ENCODE measurements at regions of chr1 and their contacts with region 1.

Region 1: GRCh38 chr1:154183045-154183915 is 8.6 kb downstream of the TPM3 start:
- DNase-seq: peak; percentile 89 to 92 (median 91)
- H3K4me3 ChIP-seq: peak overlapping the region; percentile 80 to 98 (median 80)
- H3K4me3 Mint-ChIP-seq: peak overlapping the region; percentile 100
- H3K27ac ChIP-seq: peak overlapping the region; percentile 74 to 94
- H3K27ac Mint-ChIP-seq: peak overlapping the region; percentile 99 to 100 (median 100)
- H3K4me1 ChIP-seq: peaks cover 39 to 46% of the 10 kb centered on the region in 2 donors
- H3K4me1 Mint-ChIP-seq: peaks cover 41% of the 10 kb centered on the region
- H3K27me3 ChIP-seq: no peaks in the 10 kb centered on the region
- H3K27me3 Mint-ChIP-seq: peaks cover 0 to 4% (median 0%) of the 10 kb centered on the region in 3 donors
- CTCF ChIP-seq: no peak

Region 2: GRCh38 chr1:153180556-153180955 is 1002.7 kb before region 1 on chr1:
- intact Hi-C with region 1: no loop called
- DNase-seq: no peak
- H3K4me3 ChIP-seq: no peak overlapping the region
- H3K4me3 Mint-ChIP-seq: no peak overlapping the region
- H3K27ac ChIP-seq: no peak overlapping the region
- H3K27ac Mint-ChIP-seq: no peak overlapping the region
- H3K4me1 ChIP-seq: no peaks in the 10 kb centered on the region
- H3K4me1 Mint-ChIP-seq: no peaks in the 10 kb centered on the region
- H3K27me3 ChIP-seq: peaks cover 2 to 4% of the 10 kb centered on the region in 2 donors
- H3K27me3 Mint-ChIP-seq: peaks cover 6 to 16% (median 7%) of the 10 kb centered on the region in 3 donors
- CTCF ChIP-seq: no peak

Region 3: GRCh38 chr1:154129391-154129970 is 53.8 kb before region 1 on chr1:
- intact Hi-C with region 1: loop called in 1 of 2 experiments (anchors 10 kb)
- DNase-seq: peak; percentile 37 to 66 (median 64)
- H3K4me3 ChIP-seq: peak overlapping the region in 2 of 3 experiments; percentile 12 to 66
- H3K4me3 Mint-ChIP-seq: peak overlapping the region in 1 of 2 donors; percentile 80
- H3K27ac ChIP-seq: peak overlapping the region; percentile 32 to 73
- H3K27ac Mint-ChIP-seq: peak overlapping the region; percentile 69 to 94 (median 87)
- H3K4me1 ChIP-seq: peaks cover 17 to 21% of the 10 kb centered on the region in 2 donors
- H3K4me1 Mint-ChIP-seq: peaks cover 15% of the 10 kb centered on the region
- H3K27me3 ChIP-seq: no peaks in the 10 kb centered on the region
- H3K27me3 Mint-ChIP-seq: peaks cover 0 to 1% (median 0%) of the 10 kb centered on the region in 3 donors
- CTCF ChIP-seq: no peak

Region 4: GRCh38 chr1:154220071-154220969 is 37.0 kb after region 1 on chr1 and contains the start of gene UBAP2L:
- intact Hi-C with region 1: loop called (anchors 5 kb)
- DNase-seq: peak; percentile 98 to 100 (median 100)
- H3K4me3 ChIP-seq: peak within 1 kb of the TSS; percentile 92 to 97 (median 96)
- H3K4me3 Mint-ChIP-seq: peak within 1 kb of the TSS; percentile 82 to 97
- H3K27ac ChIP-seq: peak within 1 kb of the TSS; percentile 100
- H3K27ac Mint-ChIP-seq: peak within 1 kb of the TSS; percentile 99 to 100 (median 99)
- H3K4me1 ChIP-seq: peaks cover 31 to 36% of the 10 kb centered on the region in 2 donors
- H3K4me1 Mint-ChIP-seq: peaks cover 46% of the 10 kb centered on the region
- H3K27me3 ChIP-seq: no peaks in the 10 kb centered on the region
- H3K27me3 Mint-ChIP-seq: peaks cover 0 to 5% (median 2%) of the 10 kb centered on the region in 3 donors
- CTCF ChIP-seq: no peak
- polyA plus RNA-seq, gene UBAP2L: 40.1 to 200 (median 46.8) TPM

Region 5: DNA sequence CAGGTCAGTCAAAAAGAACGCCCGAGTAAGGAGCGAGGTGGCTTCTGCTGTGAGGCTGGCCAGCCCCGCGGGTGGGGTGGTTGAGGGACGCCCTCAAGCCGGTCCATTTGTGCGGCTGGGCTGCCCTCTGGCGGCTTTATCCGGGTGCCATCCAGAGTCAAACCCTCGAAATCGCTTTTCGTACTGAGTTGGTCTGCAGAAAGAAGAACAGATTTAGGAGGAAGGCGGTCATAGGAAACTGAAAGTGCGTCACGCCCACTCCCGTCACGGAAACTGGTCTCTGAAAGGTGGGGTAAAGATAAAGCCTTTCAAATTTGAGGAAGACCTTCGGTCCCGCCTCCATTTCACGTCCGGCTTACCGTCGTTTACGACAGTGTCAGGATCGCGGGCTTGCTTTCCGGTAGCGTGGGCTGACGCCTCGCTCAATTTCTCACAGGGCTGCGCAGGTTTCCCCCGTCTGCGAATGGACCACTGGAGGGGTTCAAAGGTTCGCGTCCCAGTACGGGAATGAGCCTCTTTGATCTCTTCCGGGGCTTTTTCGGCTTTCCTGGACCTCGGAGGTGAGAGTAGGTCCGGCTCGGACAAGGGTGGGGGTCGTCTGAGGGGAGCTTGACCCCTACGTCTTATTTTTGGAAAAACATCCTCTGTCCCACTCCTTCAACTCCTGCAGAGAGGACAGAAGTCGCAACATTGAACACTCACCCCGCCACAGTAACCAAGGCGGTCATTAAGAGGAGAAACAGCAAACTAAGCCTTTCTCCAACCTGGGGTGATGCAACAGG is 89.1 kb after region 1 on chr1 and contains the start of gene HAX1:
- intact Hi-C with region 1: loop called in 1 of 2 experiments (anchors 5 kb)
- DNase-seq: peak; percentile 98 to 99 (median 99)
- H3K4me3 ChIP-seq: peak within 1 kb of the TSS; percentile 71 to 93 (median 76)
- H3K4me3 Mint-ChIP-seq: peak within 1 kb of the TSS; percentile 95 to 98
- H3K27ac ChIP-seq: peak within 1 kb of the TSS; percentile 88 to 94
- H3K27ac Mint-ChIP-seq: peak within 1 kb of the TSS; percentile 96 to 99 (median 97)
- H3K4me1 ChIP-seq: peaks cover 16 to 20% of the 10 kb centered on the region in 2 donors
- H3K4me1 Mint-ChIP-seq: peaks cover 23% of the 10 kb centered on the region
- H3K27me3 ChIP-seq: no peaks in the 10 kb centered on the region
- H3K27me3 Mint-ChIP-seq: peaks cover 0 to 3% (median 0%) of the 10 kb centered on the region in 3 donors
- CTCF ChIP-seq: peak; percentile 83
- polyA plus RNA-seq, gene HAX1: 51.4 to 94.9 (median 91.7) TPM